ENCODE measurements at regions of chr5 and their contacts with region 1.

Region 1: DNA sequence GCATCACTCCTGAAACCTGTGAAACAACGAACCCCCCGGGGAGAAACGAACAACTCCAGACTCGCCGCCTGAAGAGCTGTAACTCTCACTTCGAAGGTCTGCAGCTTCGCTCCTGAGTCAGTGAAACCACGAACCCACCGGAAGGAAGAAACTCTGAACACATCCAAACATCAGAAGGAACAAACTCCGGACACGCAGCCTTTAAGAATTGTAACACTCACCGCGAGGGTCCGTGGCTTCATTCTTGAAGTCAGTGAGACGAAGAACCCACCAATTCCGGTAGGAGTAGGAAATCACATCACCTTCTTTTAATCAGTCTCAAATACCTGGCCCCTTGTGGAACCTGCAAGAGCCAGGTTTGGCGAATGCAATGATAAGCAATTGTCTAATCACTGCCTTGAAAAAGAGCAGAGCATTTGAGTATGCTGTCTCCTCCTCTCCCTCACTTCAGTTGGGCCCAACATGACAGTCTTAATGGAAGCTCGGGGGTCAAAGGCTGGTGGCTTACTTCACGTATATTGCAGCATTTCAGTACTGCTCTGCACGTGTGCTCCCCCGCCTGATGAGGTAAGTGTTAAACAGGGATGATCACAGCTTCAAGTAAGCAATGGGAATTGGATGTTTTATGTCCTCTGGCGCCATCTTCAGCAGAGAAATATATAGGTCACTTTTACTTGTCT is 473 bp downstream of the IRGM start:
- DNase-seq: no peak

Region 2: DNA sequence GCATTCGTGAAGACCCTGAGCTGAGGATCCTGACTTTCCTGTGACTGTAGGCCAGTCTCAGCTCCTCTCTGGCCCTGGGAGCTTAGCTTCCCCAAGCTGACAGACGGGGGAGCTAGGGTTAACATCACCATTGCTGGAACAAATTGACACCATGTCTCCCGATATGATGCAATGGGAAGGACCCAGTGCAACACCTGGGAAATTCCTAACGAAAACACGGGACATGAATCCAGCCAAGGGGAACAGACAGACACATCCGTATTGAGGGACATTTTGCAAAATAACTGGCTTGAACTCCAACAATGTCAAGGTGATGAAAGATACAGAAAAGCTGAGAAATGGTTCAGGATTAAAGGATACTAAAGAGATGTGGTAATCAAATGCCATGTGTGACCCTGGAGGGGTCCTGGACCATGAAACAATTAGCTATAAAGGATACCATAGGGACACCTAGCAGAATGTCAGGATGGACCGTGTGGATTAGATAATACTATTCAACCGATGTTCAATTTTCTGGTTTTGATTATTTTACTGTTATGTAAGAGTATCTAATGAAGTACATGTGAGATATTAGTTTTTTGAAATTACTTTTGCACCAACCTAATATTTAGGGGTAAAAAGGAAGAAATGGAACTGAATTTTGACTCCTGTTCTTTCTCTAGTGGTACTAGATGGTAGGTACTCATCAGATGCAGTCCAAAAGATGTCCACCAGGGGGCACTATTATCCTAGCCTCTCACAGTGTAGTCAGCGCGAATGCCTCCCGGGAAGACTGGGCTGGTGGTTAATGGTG is 286.2 kb before region 1 on chr5:
- intact Hi-C with region 1: loop called in 1 of 2 experiments (anchors 10 kb)
- DNase-seq: no peak

Region 3: GRCh38 chr5:150816946-150817345 is 29.8 kb before region 1 on chr5:
- intact Hi-C with region 1: loop called in 1 of 2 experiments (anchors 1 kb)
- DNase-seq: no peak

Measured in posterior vena cava (tissue), 2 donors.